H1 (cell line): ENCODE measurements at regions of chr11 and their contacts with region 1.

Region 1: GRCh38 chr11:33996498-33997454 is 54.8 kb upstream of the CAPRIN1 start:
- DNase-seq: peak; percentile 19 to 86
- H3K4me3 ChIP-seq: no peak overlapping the region
- H3K27ac ChIP-seq: no peak overlapping the region
- H3K4me1 ChIP-seq: peaks cover 0 to 2% (median 0%) of the 10 kb centered on the region in 4 experiments; a peak in 1 of 7 replicates
- H3K27me3 ChIP-seq: peaks cover 0 to 8% (median 6%) of the 10 kb centered on the region in 4 experiments; a peak in 4 of 7 replicates
- CTCF ChIP-seq: peak; percentile 58 to 86 (median 72)
- EP300 ChIP-seq: no peak
- POLR2A ChIP-seq: no peak
- RAD21 ChIP-seq: peak; percentile 75 to 80

Region 2: GRCh38 chr11:33857933-33858371 is 138.8 kb before region 1 on chr11:
- CTCF ChIA-PET with region 1: interaction called, 10 read pairs
- POLR2A ChIA-PET with region 1: no interaction called
- DNase-seq: peak; percentile 59 to 92
- H3K4me3 ChIP-seq: no peak overlapping the region
- H3K27ac ChIP-seq: no peak overlapping the region
- H3K4me1 ChIP-seq: peaks cover 0 to 4% (median under 1%) of the 10 kb centered on the region in 4 experiments; a peak in 2 of 7 replicates
- H3K27me3 ChIP-seq: peaks cover 0 to 3% (median 0%) of the 10 kb centered on the region in 4 experiments; a peak in 1 of 7 replicates
- CTCF ChIP-seq: peak; percentile 91 to 96 (median 91)
- EP300 ChIP-seq: no peak
- POLR2A ChIP-seq: no peak
- RAD21 ChIP-seq: peak; percentile 98

Region 3: GRCh38 chr11:33949252-33949913 is 47.4 kb before region 1 on chr11:
- CTCF ChIA-PET with region 1: no interaction called
- POLR2A ChIA-PET with region 1: no interaction called
- DNase-seq: no peak
- H3K4me3 ChIP-seq: no peak overlapping the region
- H3K27ac ChIP-seq: no peak overlapping the region
- H3K4me1 ChIP-seq: no peaks in the 10 kb centered on the region
- H3K27me3 ChIP-seq: peaks cover 0 to 2% (median 0%) of the 10 kb centered on the region in 4 experiments; a peak in 1 of 7 replicates
- CTCF ChIP-seq: no peak
- EP300 ChIP-seq: no peak
- POLR2A ChIP-seq: no peak
- RAD21 ChIP-seq: no peak

Region 4: DNA sequence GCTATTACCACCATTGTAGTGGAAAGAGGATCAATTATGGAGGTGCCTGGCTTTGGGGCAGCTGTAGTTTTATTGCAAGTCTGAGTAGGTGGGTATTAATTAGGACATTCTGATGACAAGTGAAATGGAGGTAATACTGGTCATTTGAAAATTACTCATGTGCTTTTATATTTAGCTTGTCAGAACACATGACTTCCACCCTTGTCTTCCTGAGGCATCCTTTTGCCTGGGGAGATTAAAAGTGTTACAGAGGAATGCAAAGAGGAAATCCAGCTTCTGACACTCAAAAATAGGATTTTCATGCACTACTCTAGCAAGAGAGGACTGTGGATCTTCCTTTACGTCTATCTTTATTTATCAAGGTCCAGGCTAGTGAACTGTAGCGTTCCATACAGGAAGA is 10.1 kb after region 1 on chr11:
- CTCF ChIA-PET with region 1: interaction called, 38 read pairs
- POLR2A ChIA-PET with region 1: no interaction called
- DNase-seq: no peak
- H3K4me3 ChIP-seq: no peak overlapping the region
- H3K27ac ChIP-seq: no peak overlapping the region
- H3K4me1 ChIP-seq: no peaks in the 10 kb centered on the region
- H3K27me3 ChIP-seq: peaks cover 0 to 1% (median 0%) of the 10 kb centered on the region in 4 experiments; a peak in 1 of 7 replicates
- CTCF ChIP-seq: no peak
- EP300 ChIP-seq: no peak
- POLR2A ChIP-seq: no peak
- RAD21 ChIP-seq: no peak

Region 5: GRCh38 chr11:34019613-34020012 is 22.8 kb after region 1 on chr11:
- CTCF ChIA-PET with region 1: interaction called, 13 read pairs
- POLR2A ChIA-PET with region 1: no interaction called
- DNase-seq: no peak
- H3K4me3 ChIP-seq: no peak overlapping the region
- H3K27ac ChIP-seq: no peak overlapping the region
- H3K4me1 ChIP-seq: no peaks in the 10 kb centered on the region
- H3K27me3 ChIP-seq: no peaks in the 10 kb centered on the region
- CTCF ChIP-seq: no peak
- EP300 ChIP-seq: no peak
- POLR2A ChIP-seq: no peak
- RAD21 ChIP-seq: no peak

Region 6: GRCh38 chr11:34051349-34052035 is 54.7 kb after region 1 on chr11 and contains the start of gene CAPRIN1:
- CTCF ChIA-PET with region 1: interaction called, 12 read pairs
- POLR2A ChIA-PET with region 1: interaction called, 10 read pairs
- DNase-seq: peak; percentile 84 to 86
- H3K4me3 ChIP-seq: peak within 1 kb of the TSS; percentile 86 to 96 (median 94)
- H3K27ac ChIP-seq: peak within 1 kb of the TSS; percentile 97
- H3K4me1 ChIP-seq: peaks cover 0 to 3% (median 3%) of the 10 kb centered on the region in 4 experiments; a peak in 4 of 7 replicates
- H3K27me3 ChIP-seq: no peaks in the 10 kb centered on the region
- CTCF ChIP-seq: no peak
- EP300 ChIP-seq: 0 out of 3 replicates have a peak, but pooled peaks of 1 of the 2 experiments have one; percentile 15
- POLR2A ChIP-seq: peak; percentile 71 to 81
- RAD21 ChIP-seq: no peak
- total RNA-seq, gene CAPRIN1: 295 and 317 TPM in 2 replicates